HepG2 (cell line): ENCODE measurements at regions of chr18 and their contacts with region 1.

Region 1: GRCh38 chr18:50878345-50879301 is at the start of gene ME2:
- DNase-seq: peak; percentile 72
- ATAC-seq: peak; percentile 98
- H3K4me3 ChIP-seq: peak within 1 kb of the TSS; percentile 81 to 94 (median 90)
- H3K27ac ChIP-seq: peak within 1 kb of the TSS; percentile 70
- H3K4me1 ChIP-seq: peaks cover 32% of the 10 kb centered on the region
- H3K27me3 ChIP-seq: no peaks in the 10 kb centered on the region
- CTCF ChIP-seq: no peak
- EP300 ChIP-seq: no peak
- POLR2A ChIP-seq: peak; percentile 40 to 78; a peak in 3 of 4 replicates
- RAD21 ChIP-seq: no peak
- total RNA-seq, gene ME2: 20.6 and 28.2 TPM in 2 replicates

Region 2: DNA sequence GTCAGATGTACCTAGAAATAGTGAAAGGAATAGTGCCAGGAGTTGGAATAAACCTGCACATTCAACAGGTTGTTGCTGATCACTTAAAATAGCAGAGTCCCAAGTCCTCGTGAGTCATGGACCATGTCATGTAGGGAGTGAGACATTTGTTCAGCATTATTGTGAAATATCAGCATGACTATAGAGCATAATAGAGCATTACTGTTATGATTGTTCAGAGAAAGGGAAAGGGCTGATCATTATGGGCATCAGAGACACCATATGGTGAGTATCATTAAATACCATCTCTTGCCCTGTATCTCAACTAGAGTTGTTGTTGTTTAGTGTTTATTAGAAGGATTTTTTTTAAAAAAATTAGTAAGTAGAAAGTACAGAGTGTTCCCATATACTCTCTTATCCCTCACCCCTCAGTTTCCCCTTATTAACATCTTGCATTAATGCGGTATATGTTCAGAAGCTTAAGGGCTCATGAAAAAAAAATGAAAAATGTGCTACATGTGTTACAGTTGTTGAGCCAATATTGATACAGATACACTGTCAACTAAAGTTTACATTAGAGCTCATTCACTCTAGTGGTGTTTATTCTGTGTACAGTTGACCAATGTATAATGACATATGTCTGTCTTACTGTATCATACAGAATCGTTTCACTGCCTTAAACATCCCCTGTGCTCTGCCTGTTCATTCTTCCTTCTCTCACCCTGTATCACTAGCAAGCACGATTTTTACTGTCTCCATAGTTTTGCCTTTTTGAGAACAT is 94.9 kb after region 1 on chr18:
- CTCF ChIA-PET with region 1: no interaction called
- POLR2A ChIA-PET with region 1: interaction called, 11 read pairs
- in situ Hi-C with region 1: no loop called
- intact Hi-C with region 1: loop called (anchors 2 kb)
- DNase-seq: peak; percentile 90
- ATAC-seq: peak; percentile 98
- H3K4me3 ChIP-seq: no peak overlapping the region
- H3K27ac ChIP-seq: peak overlapping the region; percentile 16
- H3K4me1 ChIP-seq: peaks cover 33% of the 10 kb centered on the region
- H3K27me3 ChIP-seq: no peaks in the 10 kb centered on the region; a peak in 1 of 5 replicates
- CTCF ChIP-seq: no peak
- EP300 ChIP-seq: peak; percentile 59 to 81; a peak in 2 of 4 replicates
- POLR2A ChIP-seq: no peak
- RAD21 ChIP-seq: no peak

Region 3: DNA sequence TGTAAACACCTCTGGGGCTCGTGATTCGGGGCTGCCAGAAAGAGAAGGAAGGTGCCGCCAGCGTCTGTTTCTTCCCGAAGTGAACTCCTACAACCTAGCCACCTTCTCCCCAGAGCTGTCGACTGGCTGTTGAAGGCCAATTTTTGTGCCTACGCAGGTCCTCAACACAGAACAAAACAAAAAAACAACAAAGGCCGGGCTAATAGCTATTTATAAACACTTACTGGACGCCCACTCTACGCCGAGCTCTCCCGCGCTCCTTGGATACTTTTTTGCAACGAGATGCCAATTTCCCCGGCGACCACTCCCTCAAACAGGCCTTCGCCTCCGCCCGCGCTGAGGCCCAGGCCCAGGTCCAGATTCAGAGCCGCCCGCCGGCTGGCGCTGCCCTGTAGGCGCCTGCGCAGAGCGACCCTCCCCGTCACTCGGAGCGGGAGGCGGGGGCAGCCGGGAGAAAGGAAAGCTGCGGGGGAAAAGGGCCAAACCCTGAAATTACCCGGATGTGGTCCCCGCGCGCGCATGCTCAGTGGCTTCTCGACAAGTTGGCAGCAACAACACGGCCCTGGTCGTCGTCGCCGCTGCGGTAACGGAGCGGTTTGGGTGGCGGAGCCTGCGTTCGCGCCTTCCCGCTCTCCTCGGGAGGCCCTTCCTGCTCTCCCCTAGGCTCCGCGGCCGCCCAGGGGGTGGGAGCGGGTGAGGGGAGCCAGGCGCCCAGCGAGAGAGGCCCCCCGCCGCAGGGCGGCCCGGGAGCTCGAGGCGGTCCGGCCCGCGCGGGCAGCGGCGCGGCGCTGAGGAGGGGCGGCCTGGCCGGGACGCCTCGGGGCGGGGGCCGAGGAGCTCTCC is 151.3 kb after region 1 on chr18 and contains the start of gene SMAD4:
- CTCF ChIA-PET with region 1: no interaction called
- POLR2A ChIA-PET with region 1: interaction called, 13 read pairs
- in situ Hi-C with region 1: no loop called
- intact Hi-C with region 1: loop called (anchors 10 kb)
- DNase-seq: peak; percentile 89
- ATAC-seq: peak; percentile 91
- H3K4me3 ChIP-seq: peak within 1 kb of the TSS; percentile 83 to 91 (median 91)
- H3K27ac ChIP-seq: peak within 1 kb of the TSS; percentile 94
- H3K4me1 ChIP-seq: peaks cover 53% of the 10 kb centered on the region
- H3K27me3 ChIP-seq: no peaks in the 10 kb centered on the region; a peak in 1 of 5 replicates
- CTCF ChIP-seq: no peak; the same call in 1 of the 2 replicates
- EP300 ChIP-seq: no peak
- POLR2A ChIP-seq: peak; percentile 94 to 97
- RAD21 ChIP-seq: peak; percentile 35; the same call in 1 of the 2 replicates
- total RNA-seq, gene SMAD4: 72.0 and 99.1 TPM in 2 replicates